Sciatic nerve (tissue), 2 donors: ENCODE measurements at regions of chr6 and their contacts with region 1.

Region 1: DNA sequence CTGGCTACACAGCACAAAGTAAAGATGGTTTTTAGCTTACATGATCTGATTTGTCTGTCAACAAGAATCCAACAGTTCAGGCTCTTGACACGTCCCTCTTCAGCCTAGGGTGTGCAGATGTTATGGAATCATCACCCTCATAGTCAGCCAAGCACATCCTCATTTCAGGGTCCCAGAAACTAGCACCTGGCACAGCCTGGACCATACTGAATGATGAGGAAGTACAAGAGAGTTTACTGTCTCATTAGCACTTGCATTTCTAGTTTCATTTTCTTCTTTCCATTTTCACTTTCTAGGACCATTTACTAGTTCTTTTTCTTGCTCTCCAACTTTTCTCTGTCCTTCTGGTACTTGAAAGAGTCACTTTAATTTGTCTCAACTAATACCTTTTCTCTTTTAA is 6.5 kb downstream of the RIPOR2 start:
- DNase-seq: no peak
- ATAC-seq: peak; percentile 55

Region 2: GRCh38 chr6:22929311-22929985 is 1999.8 kb before region 1 on chr6:
- intact Hi-C with region 1: loop called (anchors 10 kb)
- DNase-seq: no peak
- ATAC-seq: no peak